IMR-90 (cell line): ENCODE measurements at regions of chr9 and their contacts with region 1.

Region 1: GRCh38 chr9:4750023-4750673 is 9.1 kb upstream of the AK3 start:
- DNase-seq: peak; percentile 61
- ATAC-seq: peak; percentile 90
- H3K4me3 ChIP-seq: no peak overlapping the region
- H3K27ac ChIP-seq: no peak overlapping the region
- H3K4me1 ChIP-seq: no peaks in the 10 kb centered on the region
- H3K27me3 ChIP-seq: no peaks in the 10 kb centered on the region
- CTCF ChIP-seq: peak; percentile 68
- POLR2A ChIP-seq: no peak
- RAD21 ChIP-seq: peak; percentile 58

Region 2: DNA sequence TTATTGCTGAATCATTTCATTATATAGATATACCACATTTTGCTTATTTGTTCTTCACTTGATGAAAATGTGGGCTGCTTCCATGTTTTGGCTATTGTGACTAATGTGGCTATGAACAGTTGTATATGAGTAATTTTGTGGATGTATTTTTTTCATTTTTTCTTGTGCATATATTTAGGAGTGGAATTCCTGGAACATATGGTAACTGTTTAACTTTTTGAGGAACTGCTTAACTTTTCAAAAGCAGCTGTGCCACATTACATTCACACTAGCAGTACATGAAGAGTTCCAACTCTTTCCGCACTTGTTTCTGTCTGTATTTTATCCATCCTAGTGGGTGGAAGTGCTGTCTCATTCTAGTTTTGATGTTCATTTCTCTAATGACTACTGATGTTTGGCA is 302.7 kb after region 1 on chr9:
- CTCF ChIA-PET with region 1: no interaction called
- POLR2A ChIA-PET with region 1: no interaction called
- dilution Hi-C with region 1: no loop called
- in situ Hi-C with region 1: no loop called
- intact Hi-C with region 1: loop called (anchors 10 kb)
- DNase-seq: peak; percentile 91
- ATAC-seq: peak; percentile 93
- H3K4me3 ChIP-seq: no peak overlapping the region
- H3K27ac ChIP-seq: no peak overlapping the region
- H3K4me1 ChIP-seq: peaks cover 3% of the 10 kb centered on the region; the same call in 1 of the 2 replicates
- H3K27me3 ChIP-seq: no peaks in the 10 kb centered on the region
- CTCF ChIP-seq: no peak
- POLR2A ChIP-seq: no peak
- RAD21 ChIP-seq: no peak

Region 3: GRCh38 chr9:5186416-5187169 is 436.4 kb after region 1 on chr9:
- CTCF ChIA-PET with region 1: no interaction called
- POLR2A ChIA-PET with region 1: no interaction called
- dilution Hi-C with region 1: no loop called
- in situ Hi-C with region 1: loop called (anchors 25 kb)
- intact Hi-C with region 1: loop called (anchors 10 kb)
- DNase-seq: peak; percentile 73
- ATAC-seq: peak; percentile 83
- H3K4me3 ChIP-seq: no peak overlapping the region
- H3K27ac ChIP-seq: no peak overlapping the region
- H3K4me1 ChIP-seq: no peaks in the 10 kb centered on the region
- H3K27me3 ChIP-seq: peaks cover 8% of the 10 kb centered on the region
- CTCF ChIP-seq: peak; percentile 82
- POLR2A ChIP-seq: no peak
- RAD21 ChIP-seq: peak; percentile 93